Gastrocnemius medialis (tissue), 4 donors: ENCODE measurements at regions of chrX and their contacts with region 1.

Region 1: GRCh38 chrX:7925867-7926472 is 1.2 kb downstream of the PNPLA4 start:
- DNase-seq: peak; percentile 4 to 44
- ATAC-seq: peak; percentile 43 to 60
- H3K4me3 ChIP-seq: no peak overlapping the region
- H3K27ac ChIP-seq: peak overlapping the region in 2 of 4 donors; percentile 85 to 88
- H3K4me1 ChIP-seq: peaks cover 0 to 7% of the 10 kb centered on the region in 2 donors
- H3K27me3 ChIP-seq: no peaks in the 10 kb centered on the region
- CTCF ChIP-seq: peak in 4 of 5 experiments; percentile 25 to 68 (median 40)
- POLR2A ChIP-seq: no peak

Region 2: DNA sequence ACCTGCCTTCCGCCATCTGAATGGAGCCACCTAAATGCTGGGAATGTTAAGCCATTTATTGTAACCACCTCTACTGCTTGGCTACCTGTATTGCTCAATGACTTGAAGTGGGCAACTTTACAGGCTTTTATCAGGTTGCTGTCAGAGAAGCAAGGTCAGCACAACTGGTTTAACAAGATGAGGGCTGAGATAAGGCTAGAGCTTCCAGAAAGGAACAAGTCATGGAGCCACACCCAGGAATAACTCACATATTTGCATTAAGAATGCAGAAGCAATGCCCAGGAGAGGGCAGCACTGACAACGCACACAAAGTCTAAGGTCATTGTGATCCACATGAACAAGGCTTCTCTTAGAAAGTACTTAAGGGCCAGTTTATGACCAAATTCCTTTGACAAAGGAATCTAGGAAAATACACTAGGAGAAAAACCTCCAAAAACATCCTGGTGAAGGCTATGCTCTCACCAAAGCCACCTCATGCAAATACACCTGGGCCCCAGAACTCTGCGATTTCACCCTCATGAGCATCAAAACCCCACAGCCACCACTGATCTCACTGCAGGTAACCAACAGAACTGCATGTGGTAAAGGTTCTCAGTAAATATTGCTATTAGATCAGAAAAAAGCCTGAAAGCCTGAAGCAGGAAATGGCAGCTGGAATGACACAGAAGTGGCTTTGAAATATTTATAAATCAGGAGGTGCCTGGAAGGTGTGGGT is 793.5 kb before region 1 on chrX:
- in situ Hi-C with region 1: no loop called
- intact Hi-C with region 1: loop called (anchors 5 kb)
- DNase-seq: no peak
- ATAC-seq: no peak
- H3K4me3 ChIP-seq: no peak overlapping the region
- H3K27ac ChIP-seq: peak overlapping the region in 2 of 4 donors; percentile 3 to 38
- H3K4me1 ChIP-seq: peaks cover 10 to 22% of the 10 kb centered on the region in 2 donors
- H3K27me3 ChIP-seq: no peaks in the 10 kb centered on the region
- CTCF ChIP-seq: peak in 1 of 5 experiments; percentile 43
- POLR2A ChIP-seq: no peak